ENCODE measurements at regions of chr21 and their contacts with region 1.

Region 1: DNA sequence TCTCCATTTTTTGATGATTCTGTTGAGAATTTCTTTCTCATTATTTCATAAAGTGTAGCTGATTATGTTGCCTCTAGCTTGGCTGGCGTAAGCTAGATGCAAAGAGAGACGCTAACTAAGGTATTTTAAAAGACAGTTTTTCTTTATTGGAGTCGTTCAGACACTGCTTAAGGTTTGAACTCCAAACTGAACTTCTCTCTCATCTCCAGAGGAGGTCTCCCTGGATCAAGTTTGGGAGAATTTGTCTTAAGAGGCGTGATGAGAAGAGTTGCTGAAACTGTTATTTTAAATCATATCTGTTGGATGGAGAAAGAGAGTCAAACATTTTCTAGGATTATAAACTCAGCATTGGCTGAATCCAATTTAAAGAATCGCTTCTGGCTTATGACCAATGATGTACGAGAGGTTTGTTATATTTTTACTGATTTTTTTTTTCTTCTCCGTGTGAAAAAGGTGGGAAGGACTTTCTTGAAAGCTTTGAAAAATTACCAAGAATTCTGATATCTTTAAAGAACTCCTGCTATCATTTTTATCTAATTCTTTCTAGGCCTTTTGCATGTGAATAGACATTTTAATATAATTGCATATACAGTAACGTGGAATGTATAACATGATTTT is 34.0 kb downstream of the MAP3K7CL start:
- DNase-seq: no peak
- ATAC-seq: peak; percentile 54 to 84 (median 71)
- H3K4me3 ChIP-seq: no peak overlapping the region
- H3K27ac ChIP-seq: peak overlapping the region in 4 of 12 donors; percentile 47 to 76 (median 65)
- H3K4me1 ChIP-seq: peaks cover 0 to 46% (median 9%) of the 10 kb centered on the region in 12 donors
- H3K27me3 ChIP-seq: no peaks in the 10 kb centered on the region
- CTCF ChIP-seq: peak; percentile 48 to 85 (median 72)
- POLR2A ChIP-seq: no peak

Region 2: DNA sequence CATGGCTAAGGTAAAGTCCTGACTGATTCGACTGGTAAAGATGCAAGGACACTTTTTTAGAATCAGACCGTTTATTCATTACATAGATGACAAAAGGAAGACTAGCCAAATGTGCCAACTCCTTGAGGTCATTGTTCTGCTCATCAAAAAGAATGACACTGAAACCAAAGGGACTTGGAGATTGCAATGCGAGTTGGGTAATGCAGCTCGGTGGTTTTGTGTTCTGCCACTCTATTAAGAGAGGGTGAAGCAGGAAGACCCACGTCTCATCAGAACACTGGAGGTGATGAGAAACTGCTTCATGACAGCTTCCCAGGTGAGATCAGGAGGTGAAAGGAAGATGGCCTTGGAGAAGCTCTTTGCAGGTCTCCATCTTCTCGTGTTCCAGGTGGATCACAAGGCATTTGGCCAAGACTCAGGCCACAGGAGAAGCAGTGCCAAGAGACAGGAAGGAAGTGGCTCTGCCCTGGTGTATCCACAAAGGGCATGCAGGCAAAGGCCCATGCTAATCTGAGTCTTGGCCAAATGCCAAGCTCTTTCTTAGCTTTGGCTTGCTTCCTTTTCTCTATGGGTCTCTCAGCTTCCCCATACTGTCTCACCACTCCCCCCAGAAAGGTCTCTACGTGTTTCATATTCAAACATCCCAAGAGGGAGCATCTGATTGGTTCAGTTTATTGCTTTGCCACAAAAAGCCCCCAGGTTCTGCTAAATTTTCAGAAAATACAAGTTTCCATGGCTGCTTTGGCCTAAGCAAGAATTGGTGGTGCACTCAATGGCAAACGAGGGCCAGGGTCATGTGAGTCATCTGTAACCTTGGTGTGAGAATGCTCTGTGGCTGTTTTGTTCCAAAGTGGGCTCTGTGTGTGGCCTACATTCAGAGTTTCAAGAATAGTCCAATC is 85.3 kb before region 1 on chr21:
- intact Hi-C with region 1: loop called in 1 of 10 experiments (anchors 10 kb)
- DNase-seq: peak in 2 of 5 donors; percentile 33 to 43
- ATAC-seq: peak in 3 of 4 donors; percentile 10 to 40 (median 25)
- H3K4me3 ChIP-seq: no peak overlapping the region
- H3K27ac ChIP-seq: peak overlapping the region in 1 of 12 donors; percentile 64
- H3K4me1 ChIP-seq: peaks cover 0 to 44% (median 5%) of the 10 kb centered on the region in 12 donors
- H3K27me3 ChIP-seq: no peaks in the 10 kb centered on the region
- CTCF ChIP-seq: no peak
- POLR2A ChIP-seq: no peak

Region 3: GRCh38 chr21:29085106-29085752 is 79.2 kb before region 1 on chr21:
- intact Hi-C with region 1: loop called in 8 of 10 experiments (anchors 2 to 10 kb)
- DNase-seq: no peak
- ATAC-seq: no peak
- H3K4me3 ChIP-seq: no peak overlapping the region
- H3K27ac ChIP-seq: peak overlapping the region in 3 of 12 donors; percentile 3 to 11 (median 10)
- H3K4me1 ChIP-seq: peaks cover 0 to 26% (median 4%) of the 10 kb centered on the region in 12 donors
- H3K27me3 ChIP-seq: no peaks in the 10 kb centered on the region
- CTCF ChIP-seq: no peak
- POLR2A ChIP-seq: no peak

Region 4: GRCh38 chr21:29091032-29091431 is 73.4 kb before region 1 on chr21:
- intact Hi-C with region 1: loop called in 8 of 10 experiments (anchors 2 to 10 kb)
- DNase-seq: no peak
- ATAC-seq: no peak
- H3K4me3 ChIP-seq: no peak overlapping the region
- H3K27ac ChIP-seq: peak overlapping the region in 1 of 12 donors; percentile 0
- H3K4me1 ChIP-seq: peaks cover 0 to 11% (median 0%) of the 10 kb centered on the region in 12 donors
- H3K27me3 ChIP-seq: no peaks in the 10 kb centered on the region
- CTCF ChIP-seq: no peak
- POLR2A ChIP-seq: no peak

Region 5: GRCh38 chr21:29342363-29342957 is 178.0 kb after region 1 on chr21:
- intact Hi-C with region 1: loop called in 5 of 10 experiments (anchors 5 to 10 kb)
- DNase-seq: peak; percentile 51 to 80 (median 76)
- ATAC-seq: peak; percentile 74 to 96 (median 90)
- H3K4me3 ChIP-seq: peak overlapping the region in 5 of 12 donors; percentile 6 to 36 (median 16)
- H3K27ac ChIP-seq: peak overlapping the region in 11 of 12 donors; percentile 6 to 70 (median 48)
- H3K4me1 ChIP-seq: peaks cover 2 to 72% (median 29%) of the 10 kb centered on the region in 12 donors
- H3K27me3 ChIP-seq: no peaks in the 10 kb centered on the region
- CTCF ChIP-seq: no peak
- POLR2A ChIP-seq: no peak

Region 6: DNA sequence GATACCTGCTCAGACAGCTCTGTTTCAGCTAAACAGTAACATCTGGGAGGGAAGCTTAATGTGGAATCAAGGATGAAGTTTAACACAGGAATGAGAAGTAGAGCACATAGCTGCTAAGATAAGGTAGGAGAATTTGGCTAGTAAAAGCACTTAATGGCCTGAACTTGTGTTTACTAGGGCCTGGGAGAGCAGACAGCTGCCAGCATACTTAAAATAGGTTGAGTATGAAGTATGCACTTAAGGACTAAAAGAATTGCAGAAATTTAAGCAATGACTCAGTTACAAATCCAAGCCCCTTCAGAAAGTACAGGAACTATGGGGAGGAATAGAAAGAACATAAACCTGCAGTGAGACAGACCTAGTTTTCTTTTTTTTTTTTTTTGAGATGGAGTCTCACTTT is 187.3 kb after region 1 on chr21:
- intact Hi-C with region 1: loop called in 7 of 10 experiments (anchors 5 to 10 kb)
- DNase-seq: no peak
- ATAC-seq: peak in 3 of 4 donors; percentile 32 to 37 (median 34)
- H3K4me3 ChIP-seq: no peak overlapping the region
- H3K27ac ChIP-seq: peak overlapping the region in 1 of 12 donors; percentile 32
- H3K4me1 ChIP-seq: peaks cover 0 to 32% (median 6%) of the 10 kb centered on the region in 12 donors
- H3K27me3 ChIP-seq: no peaks in the 10 kb centered on the region
- CTCF ChIP-seq: no peak
- POLR2A ChIP-seq: no peak

Region 7: DNA sequence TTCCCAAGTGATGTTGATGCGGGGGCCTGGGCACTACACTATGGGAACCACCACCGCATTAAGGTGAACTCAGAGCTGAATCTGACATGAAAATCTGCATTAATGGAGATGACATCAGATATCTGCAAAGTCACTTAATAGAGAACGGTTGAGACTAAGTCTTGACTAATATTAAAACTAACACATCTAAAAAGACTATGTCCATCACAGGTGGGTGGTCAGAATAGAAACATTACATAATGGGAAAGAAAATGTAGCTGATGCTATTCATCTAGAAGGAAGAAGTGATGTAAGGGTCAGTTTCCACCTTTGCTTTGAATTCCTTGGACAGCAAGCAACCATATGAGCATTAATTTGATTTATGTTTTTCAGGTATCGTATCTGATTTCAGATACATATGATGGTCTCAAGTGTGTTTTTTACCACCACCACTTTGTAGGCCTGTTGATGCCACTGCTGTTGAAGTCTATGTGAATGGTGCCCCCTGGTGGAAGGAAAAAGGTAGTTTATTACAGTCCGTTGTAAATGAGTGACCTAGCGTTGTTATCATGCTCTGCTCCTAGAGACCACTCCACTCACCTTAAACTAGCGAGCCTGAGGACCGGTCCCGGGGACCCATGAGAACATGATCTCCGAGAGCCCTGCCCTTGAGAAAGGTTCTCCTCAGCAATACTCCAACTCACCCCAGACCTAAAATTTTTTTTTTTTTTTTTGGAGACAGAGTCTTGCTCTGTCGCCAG is 207.8 kb after region 1 on chr21:
- intact Hi-C with region 1: loop called (anchors 1 to 5 kb)
- DNase-seq: peak in 4 of 5 donors; percentile 34 to 66 (median 46)
- ATAC-seq: peak; percentile 73 to 94 (median 88)
- H3K4me3 ChIP-seq: no peak overlapping the region
- H3K27ac ChIP-seq: no peak overlapping the region
- H3K4me1 ChIP-seq: peaks cover 0 to 3% (median 0%) of the 10 kb centered on the region in 12 donors
- H3K27me3 ChIP-seq: no peaks in the 10 kb centered on the region
- CTCF ChIP-seq: peak; percentile 65 to 80 (median 78)
- POLR2A ChIP-seq: no peak